GM10248 (cell line): ENCODE measurements at regions of chr22 and their contacts with region 1.

Region 1: DNA sequence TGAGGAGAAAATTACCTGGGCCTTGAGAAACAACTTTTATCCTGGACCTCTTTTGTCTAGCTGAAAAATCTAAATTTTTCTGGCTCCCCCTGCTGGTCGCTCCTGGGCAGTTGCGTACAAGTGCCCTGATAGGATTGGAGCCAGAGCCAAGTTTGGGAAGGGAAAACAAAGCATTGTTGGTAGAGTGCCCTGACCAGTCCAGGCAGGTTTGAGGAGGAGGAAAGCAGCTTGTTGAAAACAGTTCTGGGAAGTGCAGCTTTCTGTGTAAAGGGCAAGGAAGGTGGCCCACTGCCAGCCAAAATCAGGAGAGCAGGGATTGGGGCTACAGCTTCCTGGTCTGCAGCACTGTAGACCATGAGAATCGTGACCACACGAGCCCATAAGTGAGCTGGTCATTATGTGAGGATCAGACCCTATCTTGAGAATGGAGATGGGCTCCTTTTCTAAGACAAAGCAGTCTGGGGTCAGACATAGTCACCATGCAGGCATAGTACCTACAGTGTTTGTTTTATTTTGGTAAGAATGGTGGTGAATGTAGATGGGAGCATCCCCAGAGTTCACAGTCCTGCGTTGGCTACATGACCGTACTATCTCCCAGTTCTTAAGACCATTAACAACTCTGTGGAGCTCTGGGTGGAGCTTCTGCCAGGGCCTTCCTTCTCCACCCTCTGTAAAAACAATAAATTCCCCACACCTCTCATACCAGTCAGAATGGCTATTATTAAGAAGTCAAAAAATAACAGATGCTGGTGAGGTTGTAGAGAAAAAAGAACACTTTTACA is 21.3 kb upstream of the PIK3IP1 start:
- DNase-seq: peak; percentile 65
- CTCF ChIP-seq: peak; percentile 89

Region 2: GRCh38 chr22:31211862-31212730 is 101.5 kb before region 1 on chr22 and contains the start of gene LIMK2:
- CTCF ChIA-PET with region 1: interaction called, 15 read pairs
- POLR2A ChIA-PET with region 1: no interaction called
- DNase-seq: peak; percentile 98
- CTCF ChIP-seq: peak; percentile 92

Region 3: DNA sequence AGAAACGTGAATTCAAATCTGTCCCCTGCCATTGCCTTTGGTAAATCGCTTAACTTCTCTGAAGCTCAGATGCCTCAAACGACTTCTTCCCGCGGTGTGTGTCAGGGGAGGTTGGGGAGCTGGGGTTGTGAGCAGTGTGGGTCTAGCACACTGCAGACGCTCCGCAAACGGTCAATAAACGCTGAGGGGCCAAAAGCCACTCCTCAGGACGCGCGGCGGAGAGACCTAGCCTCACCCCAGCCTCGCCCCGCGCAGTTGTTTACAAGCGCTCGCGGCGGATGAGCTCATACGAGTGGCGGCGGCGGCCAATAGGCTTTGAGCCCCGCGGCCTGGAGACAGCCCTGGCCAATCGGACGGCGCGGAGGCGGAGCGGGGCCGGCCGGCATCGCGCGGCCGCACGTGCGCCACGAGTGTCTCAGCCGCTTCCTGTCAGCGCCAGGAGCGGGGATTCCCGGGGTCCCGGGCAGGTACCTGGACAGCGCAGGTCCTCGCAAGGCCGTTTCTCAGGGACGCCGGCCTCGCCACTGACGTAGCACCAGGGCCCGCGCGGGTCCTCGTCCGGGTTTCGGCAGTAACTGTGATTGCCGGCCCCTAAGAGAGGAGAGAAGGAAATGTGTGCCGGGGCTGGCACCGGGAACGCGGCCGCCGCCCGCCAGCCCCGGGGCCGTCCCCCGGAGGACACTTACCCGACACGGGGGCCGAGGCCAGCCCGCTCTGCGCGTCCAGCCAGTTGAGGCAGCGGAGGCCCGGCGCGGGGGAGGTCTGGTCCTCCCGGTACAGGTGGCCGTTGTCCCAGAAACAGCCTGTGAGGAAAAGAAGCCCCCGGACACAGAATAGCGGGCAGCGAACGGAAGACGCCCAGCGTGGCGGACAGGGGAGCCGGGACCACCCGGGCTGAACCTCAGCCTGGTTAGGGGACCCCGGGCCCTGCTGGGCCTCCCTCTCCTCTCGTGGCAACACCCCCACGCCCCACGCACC is 22.8 kb before region 1 on chr22:
- CTCF ChIA-PET with region 1: interaction called, 66 read pairs
- POLR2A ChIA-PET with region 1: no interaction called
- DNase-seq: peak; percentile 96
- CTCF ChIP-seq: no peak

Region 4: DNA sequence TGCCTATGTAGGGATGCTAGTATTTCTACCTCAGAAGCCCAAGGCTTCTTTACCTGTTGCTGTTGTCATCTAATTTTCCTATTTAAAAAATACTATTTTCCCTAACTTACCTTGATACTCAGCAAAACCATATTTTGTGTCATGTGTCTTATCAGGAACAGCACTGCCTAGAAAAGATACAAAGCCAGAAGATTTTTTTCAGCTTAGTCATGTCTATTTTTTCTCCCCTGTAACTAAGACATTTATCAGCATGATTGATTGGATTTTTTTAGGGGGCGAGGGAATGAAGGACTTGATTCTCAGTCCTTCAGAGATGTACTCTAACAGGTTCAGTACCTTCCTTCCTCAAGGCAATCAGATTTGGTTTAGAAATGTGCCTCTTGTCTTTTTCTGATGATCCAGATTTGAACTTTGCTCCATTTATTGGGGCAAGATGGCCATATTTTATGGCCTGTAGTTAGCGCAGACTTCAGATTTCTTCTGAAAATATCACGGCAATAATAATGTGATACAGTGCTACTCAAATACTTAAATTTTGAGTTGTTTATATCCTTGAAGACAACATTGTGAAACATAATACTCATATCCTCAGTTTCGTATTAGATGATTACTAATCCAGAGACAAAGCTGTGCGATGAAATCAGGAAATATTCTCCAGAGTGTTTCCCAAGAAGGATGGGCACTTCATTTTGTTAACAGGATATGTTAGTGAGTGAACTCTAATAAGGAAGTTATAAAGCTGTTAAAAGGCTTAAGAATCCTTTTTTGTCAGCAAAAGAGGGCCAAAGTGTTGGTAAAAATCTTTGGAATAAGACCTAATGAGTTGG is 17.5 kb before region 1 on chr22:
- CTCF ChIA-PET with region 1: interaction called, 84 read pairs
- POLR2A ChIA-PET with region 1: no interaction called
- DNase-seq: no peak
- CTCF ChIP-seq: no peak

Region 5: GRCh38 chr22:31327883-31328696 is 14.5 kb after region 1 on chr22:
- CTCF ChIA-PET with region 1: interaction called, 39 read pairs
- POLR2A ChIA-PET with region 1: no interaction called
- DNase-seq: no peak
- CTCF ChIP-seq: no peak

Region 6: DNA sequence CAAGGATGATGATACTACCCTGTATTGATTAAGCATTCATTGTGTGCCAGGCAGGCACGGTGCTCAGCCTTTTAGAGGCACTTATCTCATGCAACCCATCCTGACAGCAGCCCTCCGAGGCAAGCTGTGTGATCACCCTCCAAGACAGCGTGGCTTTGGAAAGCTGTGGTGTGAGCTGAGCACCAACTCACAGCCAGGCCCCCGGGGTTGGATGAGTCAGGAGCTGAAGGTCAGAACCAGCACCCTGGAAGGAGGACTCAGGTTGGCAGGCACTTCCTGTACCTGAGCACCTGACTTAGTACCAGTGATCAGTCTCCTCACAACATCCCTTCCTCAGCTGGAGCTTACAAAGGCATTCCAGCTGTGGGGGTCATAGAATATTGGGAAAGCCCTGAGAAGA is 23.6 kb after region 1 on chr22:
- CTCF ChIA-PET with region 1: interaction called, 30 read pairs
- POLR2A ChIA-PET with region 1: no interaction called
- DNase-seq: no peak
- CTCF ChIP-seq: no peak